ENCODE measurements at regions of chr2 and their contacts with region 1.

Region 1: GRCh38 chr2:215811409-215812345 is 201.7 kb downstream of the MREG start:
- DNase-seq: peak; percentile 19
- ATAC-seq: peak; percentile 89
- H3K4me3 Mint-ChIP-seq: peak overlapping the region; percentile 57
- H3K27ac Mint-ChIP-seq: peak overlapping the region; percentile 35
- H3K4me1 Mint-ChIP-seq: peaks cover 40% of the 10 kb centered on the region
- H3K27me3 Mint-ChIP-seq: peaks cover 2% of the 10 kb centered on the region
- CTCF ChIP-seq: no peak

Region 2: GRCh38 chr2:216013080-216013909 is 201.6 kb after region 1 on chr2 and contains the start of gene MREG:
- CTCF ChIA-PET with region 1: no interaction called
- POLR2A ChIA-PET with region 1: no interaction called
- intact Hi-C with region 1: loop called (anchors 5 kb)
- DNase-seq: peak; percentile 79
- ATAC-seq: peak; percentile 84
- H3K4me3 Mint-ChIP-seq: peak within 1 kb of the TSS; percentile 89
- H3K27ac Mint-ChIP-seq: peak within 1 kb of the TSS; percentile 76
- H3K4me1 Mint-ChIP-seq: peaks cover 66% of the 10 kb centered on the region
- H3K27me3 Mint-ChIP-seq: no peaks in the 10 kb centered on the region
- CTCF ChIP-seq: no peak
- total RNA-seq, gene MREG: 16.2 and 16.6 TPM in 2 replicates

Region 3: GRCh38 chr2:216139884-216140283 is 328.2 kb after region 1 on chr2:
- CTCF ChIA-PET with region 1: no interaction called
- POLR2A ChIA-PET with region 1: no interaction called
- intact Hi-C with region 1: no loop called
- DNase-seq: no peak
- ATAC-seq: peak; percentile 50
- H3K4me3 Mint-ChIP-seq: no peak overlapping the region
- H3K27ac Mint-ChIP-seq: no peak overlapping the region
- H3K4me1 Mint-ChIP-seq: peaks cover 2% of the 10 kb centered on the region
- H3K27me3 Mint-ChIP-seq: no peaks in the 10 kb centered on the region
- CTCF ChIP-seq: no peak

Measured in activated B cell treated with CpG ODN at 0.5 μM for 24 hours (primary cell).